Panc1 (cell line): ENCODE measurements at regions of chr3 and their contacts with region 1.

Region 1: DNA sequence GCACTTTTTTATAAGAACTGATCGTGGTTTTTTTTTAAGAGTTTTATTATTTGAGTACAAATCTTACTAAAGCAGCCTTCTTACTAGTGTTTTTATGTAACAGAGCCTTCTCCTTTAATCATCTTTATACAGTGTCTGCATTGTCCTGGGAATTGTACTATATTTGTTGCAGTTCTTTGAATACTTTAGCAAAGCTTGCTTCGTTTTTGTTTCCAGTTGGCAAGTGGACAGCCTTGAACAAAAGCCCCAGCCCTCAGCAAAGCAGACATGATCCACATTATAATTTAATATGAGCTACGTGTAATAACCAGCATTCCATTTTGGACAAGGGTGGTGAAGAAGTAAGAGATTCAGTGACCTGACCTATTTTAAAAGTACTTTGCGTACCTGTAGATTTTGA is 112.2 kb upstream of the FLNB start:
- DNase-seq: no peak
- ATAC-seq: no peak
- H3K4me3 ChIP-seq: no peak overlapping the region
- H3K27ac ChIP-seq: no peak overlapping the region
- H3K4me1 ChIP-seq: no peaks in the 10 kb centered on the region
- H3K27me3 ChIP-seq: no peaks in the 10 kb centered on the region
- CTCF ChIP-seq: no peak

Region 2: DNA sequence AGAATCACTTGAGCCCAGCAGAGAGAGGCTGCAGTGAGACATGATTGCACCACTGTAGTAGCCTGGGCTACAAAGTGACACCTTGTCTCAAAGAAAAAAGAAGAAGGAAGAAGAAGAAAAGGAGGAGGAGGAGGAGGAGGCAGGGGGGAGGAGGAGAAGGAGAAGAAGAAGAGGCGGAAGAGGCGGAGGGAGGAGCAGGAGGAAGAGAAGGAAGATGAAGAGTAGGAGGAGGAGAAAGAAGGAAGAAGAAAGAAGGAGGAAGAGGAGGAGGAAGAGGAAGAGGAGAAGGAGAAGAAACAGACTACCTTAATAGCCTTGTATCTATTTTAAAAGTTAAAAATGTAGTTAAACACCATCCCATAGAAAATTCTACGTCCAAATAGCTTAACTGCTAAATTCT is 279.8 kb before region 1 on chr3:
- CTCF ChIA-PET with region 1: no interaction called
- POLR2A ChIA-PET with region 1: interaction called, 12 read pairs
- in situ Hi-C with region 1: no loop called
- intact Hi-C with region 1: no loop called
- DNase-seq: no peak
- ATAC-seq: no peak
- H3K4me3 ChIP-seq: no peak overlapping the region
- H3K27ac ChIP-seq: no peak overlapping the region
- H3K4me1 ChIP-seq: no peaks in the 10 kb centered on the region
- H3K27me3 ChIP-seq: no peaks in the 10 kb centered on the region
- CTCF ChIP-seq: no peak

Region 3: GRCh38 chr3:57778494-57778893 is 117.5 kb before region 1 on chr3:
- CTCF ChIA-PET with region 1: no interaction called
- POLR2A ChIA-PET with region 1: interaction called, 11 read pairs
- in situ Hi-C with region 1: no loop called
- intact Hi-C with region 1: no loop called
- DNase-seq: no peak
- ATAC-seq: no peak
- H3K4me3 ChIP-seq: no peak overlapping the region
- H3K27ac ChIP-seq: no peak overlapping the region
- H3K4me1 ChIP-seq: no peaks in the 10 kb centered on the region
- H3K27me3 ChIP-seq: no peaks in the 10 kb centered on the region
- CTCF ChIP-seq: no peak